HCT116 (cell line): ENCODE measurements at regions of chr5 and their contacts with region 1.

Region 1: DNA sequence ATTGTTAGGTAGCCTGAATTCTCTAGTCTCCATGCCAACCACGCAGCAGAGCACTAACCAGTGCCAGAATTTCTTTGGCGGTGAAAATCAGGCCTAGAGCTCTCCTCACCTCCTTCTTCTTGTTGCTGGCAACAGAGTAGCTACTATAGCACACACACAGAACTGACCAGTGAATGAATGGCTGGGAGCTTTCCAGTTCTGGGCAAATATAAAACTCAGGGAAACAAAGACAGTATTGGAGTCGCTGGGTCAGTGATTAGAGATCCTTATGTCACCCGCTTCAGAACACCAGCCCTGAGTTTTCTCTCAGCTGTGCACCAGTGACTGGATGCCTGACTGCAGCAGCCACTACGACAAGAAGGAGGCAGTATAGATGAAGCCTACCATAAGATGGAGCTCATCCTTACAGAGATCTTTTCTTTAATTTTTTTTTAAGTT is 26.9 kb upstream of the FEM1C start:
- DNase-seq: no peak
- ATAC-seq: peak; percentile 39; the same call in 1 of the 2 replicates
- H3K4me3 ChIP-seq: no peak overlapping the region
- H3K27ac ChIP-seq: no peak overlapping the region
- H3K4me1 ChIP-seq: peaks cover 0 to 32% of the 10 kb centered on the region in 2 experiments; a peak in 3 of 4 replicates
- H3K27me3 ChIP-seq: no peaks in the 10 kb centered on the region
- CTCF ChIP-seq: peak in 1 of 3 experiments; percentile 19; a peak in 1 of 6 replicates
- POLR2A ChIP-seq: no peak
- RAD21 ChIP-seq: no peak

Region 2: GRCh38 chr5:115551415-115551814 is 20.0 kb before region 1 on chr5:
- CTCF ChIA-PET with region 1: interaction called, 4 read pairs
- POLR2A ChIA-PET with region 1: interaction called, 3 read pairs
- RAD21 ChIA-PET with region 1: no interaction called
- intact Hi-C with region 1: loop called (anchors 2 kb)
- DNase-seq: no peak
- ATAC-seq: no peak
- H3K4me3 ChIP-seq: no peak overlapping the region
- H3K27ac ChIP-seq: no peak overlapping the region
- H3K4me1 ChIP-seq: peaks cover 0 to 14% of the 10 kb centered on the region in 2 experiments; a peak in 2 of 4 replicates
- H3K27me3 ChIP-seq: no peaks in the 10 kb centered on the region
- CTCF ChIP-seq: no peak
- POLR2A ChIP-seq: no peak
- RAD21 ChIP-seq: no peak

Region 3: GRCh38 chr5:115749016-115749415 is 177.6 kb after region 1 on chr5:
- CTCF ChIA-PET with region 1: no interaction called
- POLR2A ChIA-PET with region 1: no interaction called
- RAD21 ChIA-PET with region 1: no interaction called
- intact Hi-C with region 1: no loop called
- DNase-seq: peak; percentile 45
- ATAC-seq: peak; percentile 42; the same call in 1 of the 2 replicates
- H3K4me3 ChIP-seq: no peak overlapping the region
- H3K27ac ChIP-seq: no peak overlapping the region
- H3K4me1 ChIP-seq: peaks cover 0 to 11% of the 10 kb centered on the region in 2 experiments; a peak in 2 of 4 replicates
- H3K27me3 ChIP-seq: no peaks in the 10 kb centered on the region
- CTCF ChIP-seq: no peak
- POLR2A ChIP-seq: no peak
- RAD21 ChIP-seq: no peak

Region 4: DNA sequence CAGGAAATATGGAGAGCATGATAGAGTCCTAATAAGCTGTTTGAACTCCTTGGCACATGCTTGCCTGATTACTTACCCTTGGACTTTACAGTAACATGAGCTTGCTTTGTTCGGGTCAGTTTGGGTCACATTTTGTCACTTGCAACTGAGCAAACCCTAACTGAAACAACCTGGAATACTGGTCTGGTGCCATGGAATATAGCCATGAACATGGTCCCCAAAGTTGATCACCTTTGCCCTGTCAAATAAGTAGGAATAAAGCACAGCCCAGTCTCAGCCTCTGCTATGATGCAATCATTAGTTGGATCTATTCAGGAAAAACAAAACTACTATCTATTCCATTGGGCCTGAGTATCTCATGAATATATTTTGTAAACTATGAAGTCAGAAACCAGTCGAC is 226.8 kb after region 1 on chr5:
- CTCF ChIA-PET with region 1: no interaction called
- POLR2A ChIA-PET with region 1: no interaction called
- RAD21 ChIA-PET with region 1: no interaction called
- intact Hi-C with region 1: no loop called
- DNase-seq: no peak
- ATAC-seq: no peak
- H3K4me3 ChIP-seq: no peak overlapping the region
- H3K27ac ChIP-seq: no peak overlapping the region
- H3K4me1 ChIP-seq: no peaks in the 10 kb centered on the region
- H3K27me3 ChIP-seq: no peaks in the 10 kb centered on the region
- CTCF ChIP-seq: no peak
- POLR2A ChIP-seq: no peak
- RAD21 ChIP-seq: no peak